B cell (primary cell): ENCODE measurements at regions of chr16 and their contacts with region 1.

Region 1: GRCh38 chr16:84593825-84594724 is 23.8 kb downstream of the COTL1 start:
- DNase-seq: peak; percentile 94
- ATAC-seq: peak; percentile 85
- H3K4me3 ChIP-seq: peak overlapping the region; percentile 41 to 69 (median 52)
- H3K4me3 Mint-ChIP-seq: peak overlapping the region; percentile 92
- H3K27ac ChIP-seq: peak overlapping the region; percentile 91 to 94
- H3K27ac Mint-ChIP-seq: peak overlapping the region; percentile 94
- H3K4me1 ChIP-seq: peaks cover 62 to 87% of the 10 kb centered on the region in 2 donors
- H3K4me1 Mint-ChIP-seq: peaks cover 72% of the 10 kb centered on the region
- H3K27me3 ChIP-seq: no peaks in the 10 kb centered on the region
- H3K27me3 Mint-ChIP-seq: no peaks in the 10 kb centered on the region
- CTCF ChIP-seq: no peak

Region 2: DNA sequence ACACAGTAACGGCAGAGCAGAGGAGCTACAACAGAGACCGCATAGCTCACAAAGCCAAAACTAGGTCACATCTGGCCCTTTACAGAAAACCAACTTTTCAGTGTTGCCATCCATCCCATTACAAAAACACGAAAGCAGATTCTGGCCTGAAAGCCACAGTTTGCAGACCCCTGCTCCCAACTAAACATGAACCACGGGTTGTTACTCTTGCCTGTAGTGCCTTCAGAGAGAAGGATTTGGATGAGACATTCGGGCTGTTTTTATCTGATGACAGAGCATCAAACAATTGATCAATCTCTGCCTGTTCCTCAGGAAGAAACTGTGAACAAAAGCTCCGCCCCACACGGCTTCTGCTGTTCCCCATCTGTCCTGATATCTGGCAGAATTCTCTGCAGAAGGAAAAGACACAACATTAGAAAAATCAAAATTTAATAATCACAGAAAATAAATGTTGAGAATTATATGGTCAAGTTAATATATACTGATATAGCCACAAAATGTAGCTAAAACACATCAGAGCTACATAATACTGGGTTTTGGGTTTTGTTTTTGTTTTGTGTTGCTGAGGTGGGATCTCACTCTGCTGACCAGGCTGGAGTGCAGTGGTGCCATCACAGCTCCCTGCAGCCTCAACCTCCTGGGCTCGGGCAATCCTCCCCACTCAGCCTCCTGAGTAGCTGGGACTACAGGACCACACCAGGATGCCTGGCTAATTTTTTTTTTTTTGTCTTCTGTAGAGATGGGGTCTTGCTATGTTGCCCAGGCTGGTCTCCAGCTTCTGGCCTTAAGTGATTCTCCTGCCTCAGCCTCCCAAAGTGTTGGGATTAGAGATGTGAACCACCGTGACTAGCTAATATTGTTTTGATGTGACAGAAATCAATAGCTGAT is 96.1 kb before region 1 on chr16:
- CTCF ChIA-PET with region 1: no interaction called
- POLR2A ChIA-PET with region 1: no interaction called
- intact Hi-C with region 1: no loop called
- DNase-seq: no peak
- ATAC-seq: no peak
- H3K4me3 ChIP-seq: no peak overlapping the region
- H3K4me3 Mint-ChIP-seq: no peak overlapping the region
- H3K27ac ChIP-seq: no peak overlapping the region
- H3K27ac Mint-ChIP-seq: no peak overlapping the region
- H3K4me1 ChIP-seq: no peaks in the 10 kb centered on the region
- H3K4me1 Mint-ChIP-seq: peaks cover 2% of the 10 kb centered on the region
- H3K27me3 ChIP-seq: no peaks in the 10 kb centered on the region
- H3K27me3 Mint-ChIP-seq: no peaks in the 10 kb centered on the region
- CTCF ChIP-seq: no peak

Region 3: GRCh38 chr16:84524346-84524920 is 69.6 kb before region 1 on chr16:
- CTCF ChIA-PET with region 1: no interaction called
- POLR2A ChIA-PET with region 1: no interaction called
- intact Hi-C with region 1: no loop called
- DNase-seq: no peak
- ATAC-seq: no peak
- H3K4me3 ChIP-seq: no peak overlapping the region
- H3K4me3 Mint-ChIP-seq: no peak overlapping the region
- H3K27ac ChIP-seq: no peak overlapping the region
- H3K27ac Mint-ChIP-seq: no peak overlapping the region
- H3K4me1 ChIP-seq: no peaks in the 10 kb centered on the region
- H3K4me1 Mint-ChIP-seq: no peaks in the 10 kb centered on the region
- H3K27me3 ChIP-seq: no peaks in the 10 kb centered on the region
- H3K27me3 Mint-ChIP-seq: no peaks in the 10 kb centered on the region
- CTCF ChIP-seq: no peak

Region 4: GRCh38 chr16:84562174-84562815 is 31.8 kb before region 1 on chr16:
- CTCF ChIA-PET with region 1: interaction called, 5 read pairs
- POLR2A ChIA-PET with region 1: interaction called, 3 read pairs
- intact Hi-C with region 1: loop called (anchors 2 kb)
- DNase-seq: peak; percentile 80
- ATAC-seq: peak; percentile 89
- H3K4me3 ChIP-seq: no peak overlapping the region
- H3K4me3 Mint-ChIP-seq: peak overlapping the region; percentile 58
- H3K27ac ChIP-seq: peak overlapping the region; percentile 61 to 69
- H3K27ac Mint-ChIP-seq: peak overlapping the region; percentile 90
- H3K4me1 ChIP-seq: peaks cover 23 to 32% of the 10 kb centered on the region in 2 donors
- H3K4me1 Mint-ChIP-seq: peaks cover 27% of the 10 kb centered on the region
- H3K27me3 ChIP-seq: peaks cover 0 to under 1% (median 0%) of the 10 kb centered on the region in 4 experiments
- H3K27me3 Mint-ChIP-seq: no peaks in the 10 kb centered on the region
- CTCF ChIP-seq: no peak

Region 5: DNA sequence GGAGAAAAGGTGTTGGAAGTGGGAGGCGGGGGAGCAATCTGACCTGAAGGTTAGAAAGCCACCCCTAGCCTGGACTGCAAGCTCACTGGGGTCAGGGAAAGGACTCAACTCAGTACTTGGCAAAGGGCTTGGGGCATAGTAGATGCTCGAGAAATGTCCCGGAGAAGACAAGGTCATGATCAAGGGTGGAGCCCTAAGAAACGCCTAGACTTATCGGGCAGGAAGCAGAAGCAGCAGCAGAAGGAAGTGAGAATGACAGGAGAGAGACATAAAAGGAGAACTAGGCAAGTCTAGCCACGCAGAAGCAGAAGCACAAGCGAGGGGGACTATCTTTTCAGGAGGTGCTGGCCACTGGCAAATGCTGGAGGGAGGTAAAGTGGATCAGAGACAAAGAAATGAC is 13.6 kb after region 1 on chr16:
- CTCF ChIA-PET with region 1: interaction called, 42 read pairs
- POLR2A ChIA-PET with region 1: interaction called, 17 read pairs
- intact Hi-C with region 1: loop called (anchors 1 kb)
- DNase-seq: peak; percentile 86
- ATAC-seq: peak; percentile 75
- H3K4me3 ChIP-seq: peak overlapping the region in 3 of 5 experiments; percentile 19 to 55 (median 28)
- H3K4me3 Mint-ChIP-seq: peak overlapping the region; percentile 69
- H3K27ac ChIP-seq: peak overlapping the region; percentile 80 to 86
- H3K27ac Mint-ChIP-seq: peak overlapping the region; percentile 91
- H3K4me1 ChIP-seq: peaks cover 89 to 95% of the 10 kb centered on the region in 2 donors
- H3K4me1 Mint-ChIP-seq: peaks cover 93% of the 10 kb centered on the region
- H3K27me3 ChIP-seq: no peaks in the 10 kb centered on the region
- H3K27me3 Mint-ChIP-seq: no peaks in the 10 kb centered on the region
- CTCF ChIP-seq: no peak